ENCODE measurements at regions of chr7 and their contacts with region 1.

Region 1: DNA sequence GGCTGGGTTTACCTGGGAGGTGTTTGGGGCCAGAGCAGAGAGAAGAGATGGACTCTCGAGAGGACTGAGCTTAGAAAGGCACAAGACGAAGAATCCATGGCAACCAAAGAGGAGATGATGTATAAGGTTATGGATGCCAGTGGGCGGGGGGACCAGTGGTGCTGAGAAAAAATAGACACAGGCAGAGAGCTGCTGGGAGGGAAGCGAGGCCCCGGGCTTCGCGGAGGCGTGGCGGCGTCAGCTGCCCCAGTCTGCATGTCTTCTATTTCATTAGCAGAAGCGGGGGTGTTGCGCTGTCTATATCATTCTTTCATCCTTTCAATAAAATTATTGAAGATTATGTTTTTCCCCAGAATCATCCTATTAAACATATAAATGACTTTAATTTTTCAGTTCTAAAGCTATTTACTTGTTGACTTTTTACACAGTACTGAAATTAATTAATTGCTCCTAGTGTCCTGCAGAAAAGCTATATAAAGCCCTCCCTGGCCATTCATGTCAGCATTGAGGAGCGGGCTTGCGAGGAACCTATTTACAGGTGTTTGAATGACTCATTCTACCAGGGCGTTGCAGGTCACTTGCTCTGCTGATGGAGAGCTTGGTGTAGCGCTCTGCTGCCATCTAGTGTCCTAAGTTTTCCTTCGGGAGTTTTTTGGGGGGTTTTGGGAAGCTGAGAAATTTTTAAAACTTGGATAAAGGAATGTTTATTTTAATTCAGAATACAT is 42.9 kb upstream of the BHLHA15 start:
- DNase-seq: peak; percentile 86
- CTCF ChIP-seq: peak; percentile 61

Region 2: DNA sequence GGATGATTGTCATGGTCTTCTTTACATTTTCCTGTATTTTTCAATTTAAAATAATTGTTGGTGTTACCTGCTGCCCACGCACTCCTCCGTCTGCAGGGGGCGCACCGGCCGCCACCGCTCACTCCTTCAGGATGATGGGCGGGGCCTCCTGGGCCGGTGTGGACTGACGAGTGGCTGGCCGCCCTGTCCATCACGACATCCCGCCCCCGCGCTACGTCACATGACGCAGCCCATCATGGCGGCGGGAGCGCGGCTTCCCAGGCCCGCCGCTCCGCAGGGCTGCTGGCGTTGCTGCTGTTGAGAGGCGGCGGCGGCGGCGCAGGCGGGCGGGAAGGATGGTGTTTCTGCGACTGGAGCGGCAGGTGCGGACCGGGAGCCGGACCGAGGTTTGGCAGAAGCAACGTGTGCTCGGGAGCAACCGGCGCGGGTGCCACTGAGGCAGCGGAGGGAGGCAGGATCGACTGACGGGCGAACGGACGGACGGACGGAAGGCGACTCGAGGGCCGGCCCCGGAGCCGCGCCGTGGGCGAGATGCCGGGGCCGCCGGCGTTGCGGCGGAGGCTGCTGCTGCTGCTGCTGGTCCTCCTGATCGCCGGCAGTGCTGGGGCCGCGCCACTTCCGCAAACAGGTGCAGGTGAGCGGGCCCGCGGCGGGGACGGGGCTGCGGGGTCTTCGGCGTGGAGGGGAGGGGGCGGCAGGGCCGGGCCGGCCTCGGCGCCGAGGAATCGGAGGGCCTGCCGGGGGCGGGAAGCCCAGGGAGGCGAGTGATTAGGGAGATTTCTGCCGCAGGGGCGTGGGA is 61.5 kb before region 1 on chr7 and contains the start of gene LMTK2:
- in situ Hi-C with region 1: loop called (anchors 10 kb)
- DNase-seq: peak; percentile 98
- CTCF ChIP-seq: peak; percentile 94

Region 3: DNA sequence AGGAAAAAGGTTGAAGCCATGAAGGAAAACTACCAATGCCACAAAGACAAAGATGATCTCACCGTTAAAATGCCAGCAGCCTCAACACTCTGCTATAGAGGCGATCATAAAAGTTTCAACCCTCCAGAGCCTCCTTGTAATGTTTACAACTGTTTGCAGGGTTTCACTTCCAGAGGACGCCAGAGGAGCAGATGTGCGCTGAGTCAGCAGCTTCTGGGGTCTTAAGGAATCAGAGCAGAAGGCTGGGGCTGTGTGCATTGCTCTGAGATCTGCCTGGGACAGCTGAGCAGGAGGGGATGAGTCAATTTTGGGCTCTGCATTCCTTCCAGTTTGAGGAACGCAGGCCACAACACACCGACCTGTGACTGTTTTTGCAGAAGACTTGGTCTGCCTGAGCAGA is 603.2 kb after region 1 on chr7:
- in situ Hi-C with region 1: no loop called
- DNase-seq: no peak
- CTCF ChIP-seq: no peak

Region 4: DNA sequence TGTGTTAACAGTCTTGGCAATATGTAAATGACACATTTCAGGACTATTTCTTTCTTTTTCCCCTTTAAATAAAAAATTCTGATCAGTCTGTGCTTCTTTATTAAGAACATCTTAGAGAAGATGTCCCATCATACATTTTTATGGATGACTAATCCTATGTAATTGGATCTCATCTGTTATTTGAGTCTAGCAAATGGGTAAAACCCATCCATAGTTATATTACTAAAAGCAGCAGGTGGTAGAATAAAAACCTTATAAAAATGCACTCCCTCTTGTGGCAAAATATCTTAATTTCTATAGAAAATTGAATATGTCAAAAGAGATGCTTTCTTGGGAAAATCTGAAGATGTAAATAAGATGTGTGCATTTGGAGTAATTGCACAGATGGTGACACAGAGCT is 745.3 kb after region 1 on chr7:
- in situ Hi-C with region 1: no loop called
- DNase-seq: no peak
- CTCF ChIP-seq: no peak